Panc1 (cell line): ENCODE measurements at regions of chrX and their contacts with region 1.

Region 1: GRCh38 chrX:143081231-143081630 is 55.5 kb downstream of the SPANXN4 start:
- DNase-seq: no peak
- ATAC-seq: no peak
- H3K4me3 ChIP-seq: no peak overlapping the region
- H3K27ac ChIP-seq: no peak overlapping the region
- H3K4me1 ChIP-seq: no peaks in the 10 kb centered on the region
- H3K27me3 ChIP-seq: no peaks in the 10 kb centered on the region
- CTCF ChIP-seq: no peak

Region 2: GRCh38 chrX:143121468-143121867 is 40.2 kb after region 1 on chrX:
- CTCF ChIA-PET with region 1: interaction called, 12 read pairs
- POLR2A ChIA-PET with region 1: no interaction called
- in situ Hi-C with region 1: no loop called
- intact Hi-C with region 1: no loop called
- DNase-seq: no peak
- ATAC-seq: no peak
- H3K4me3 ChIP-seq: no peak overlapping the region
- H3K27ac ChIP-seq: no peak overlapping the region
- H3K4me1 ChIP-seq: no peaks in the 10 kb centered on the region
- H3K27me3 ChIP-seq: no peaks in the 10 kb centered on the region
- CTCF ChIP-seq: no peak